PC-9 (cell line): ENCODE measurements at regions of chr11 and their contacts with region 1.

Region 1: GRCh38 chr11:6307876-6308275 is 12.4 kb downstream of the CAVIN3 start:
- DNase-seq: no peak
- H3K4me3 ChIP-seq: no peak overlapping the region
- H3K27ac ChIP-seq: no peak overlapping the region
- H3K4me1 ChIP-seq: no peaks in the 10 kb centered on the region
- H3K27me3 ChIP-seq: no peaks in the 10 kb centered on the region
- CTCF ChIP-seq: no peak

Region 2: DNA sequence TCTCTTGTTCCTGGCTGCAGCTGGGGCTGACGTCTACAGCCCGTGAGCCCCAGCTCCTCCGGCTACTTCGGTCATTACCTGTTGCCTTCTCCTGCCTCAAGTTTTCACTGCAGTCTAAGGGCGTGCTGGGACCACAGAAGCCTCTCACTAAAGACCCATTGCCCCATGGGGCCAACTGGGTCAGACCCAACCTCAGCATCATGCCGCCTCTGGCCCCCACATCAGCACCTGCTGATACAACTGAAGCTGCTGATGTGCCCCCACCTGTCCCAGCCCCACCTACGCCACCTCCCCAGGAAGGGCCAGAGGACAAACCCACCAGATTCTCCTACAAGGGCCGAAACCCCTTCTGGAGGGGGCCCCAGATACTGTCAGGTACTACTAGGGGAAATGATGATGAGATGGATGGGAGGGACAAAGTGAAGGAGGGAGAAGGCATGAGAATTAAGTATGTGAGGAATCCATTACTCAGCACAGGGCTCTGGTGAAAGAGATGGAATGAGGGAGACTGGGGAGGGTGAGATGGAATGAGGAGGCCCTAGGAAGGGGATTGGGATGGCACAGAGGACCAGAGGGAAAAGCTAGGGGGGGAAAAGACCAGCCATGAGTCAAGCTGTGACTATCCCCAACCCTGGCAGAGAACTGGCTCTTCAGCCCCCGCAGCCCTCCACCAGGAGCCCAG is 97.5 kb before region 1 on chr11:
- CTCF ChIA-PET with region 1: no interaction called
- POLR2A ChIA-PET with region 1: no interaction called
- intact Hi-C with region 1: no loop called
- DNase-seq: no peak
- H3K4me3 ChIP-seq: no peak overlapping the region
- H3K27ac ChIP-seq: no peak overlapping the region
- H3K4me1 ChIP-seq: no peaks in the 10 kb centered on the region
- H3K27me3 ChIP-seq: no peaks in the 10 kb centered on the region
- CTCF ChIP-seq: no peak

Region 3: GRCh38 chr11:6258571-6259081 is 49.2 kb before region 1 on chr11:
- CTCF ChIA-PET with region 1: no interaction called
- POLR2A ChIA-PET with region 1: interaction called, 11 read pairs
- intact Hi-C with region 1: no loop called
- DNase-seq: no peak
- H3K4me3 ChIP-seq: no peak overlapping the region
- H3K27ac ChIP-seq: no peak overlapping the region
- H3K4me1 ChIP-seq: no peaks in the 10 kb centered on the region
- H3K27me3 ChIP-seq: peaks cover 31% of the 10 kb centered on the region
- CTCF ChIP-seq: no peak